Body of pancreas (tissue), 4 donors: ENCODE measurements at regions of chr16 and their contacts with region 1.

Region 1: GRCh38 chr16:72124761-72125634 is 31.4 kb downstream of the DHX38 start:
- DNase-seq: peak; percentile 72 to 78 (median 76)
- ATAC-seq: peak; percentile 79
- H3K4me3 ChIP-seq: no peak overlapping the region
- H3K27ac ChIP-seq: peak overlapping the region in 2 of 4 donors; percentile 41 to 57
- H3K4me1 ChIP-seq: peaks cover 16% of the 10 kb centered on the region
- H3K27me3 ChIP-seq: no peaks in the 10 kb centered on the region
- CTCF ChIP-seq: peak; percentile 38 to 80 (median 77)
- POLR2A ChIP-seq: no peak

Region 2: GRCh38 chr16:72474501-72475123 is 349.6 kb after region 1 on chr16:
- intact Hi-C with region 1: loop called (anchors 10 kb)
- DNase-seq: no peak
- ATAC-seq: no peak
- H3K4me3 ChIP-seq: no peak overlapping the region
- H3K27ac ChIP-seq: no peak overlapping the region
- H3K4me1 ChIP-seq: no peaks in the 10 kb centered on the region
- H3K27me3 ChIP-seq: no peaks in the 10 kb centered on the region
- CTCF ChIP-seq: no peak
- POLR2A ChIP-seq: no peak